GM23248 (cell line): ENCODE measurements at regions of chr11 and their contacts with region 1.

Region 1: GRCh38 chr11:23097891-23098290 is 237.6 kb upstream of the CCDC179 start:
- DNase-seq: no peak
- H3K4me3 ChIP-seq: no peak overlapping the region
- H3K27ac ChIP-seq: no peak overlapping the region
- H3K4me1 ChIP-seq: 0 out of 2 replicates have a peak, but pooled peaks cover 6% of the 10 kb centered on the region
- H3K27me3 ChIP-seq: no peaks in the 10 kb centered on the region

Region 2: DNA sequence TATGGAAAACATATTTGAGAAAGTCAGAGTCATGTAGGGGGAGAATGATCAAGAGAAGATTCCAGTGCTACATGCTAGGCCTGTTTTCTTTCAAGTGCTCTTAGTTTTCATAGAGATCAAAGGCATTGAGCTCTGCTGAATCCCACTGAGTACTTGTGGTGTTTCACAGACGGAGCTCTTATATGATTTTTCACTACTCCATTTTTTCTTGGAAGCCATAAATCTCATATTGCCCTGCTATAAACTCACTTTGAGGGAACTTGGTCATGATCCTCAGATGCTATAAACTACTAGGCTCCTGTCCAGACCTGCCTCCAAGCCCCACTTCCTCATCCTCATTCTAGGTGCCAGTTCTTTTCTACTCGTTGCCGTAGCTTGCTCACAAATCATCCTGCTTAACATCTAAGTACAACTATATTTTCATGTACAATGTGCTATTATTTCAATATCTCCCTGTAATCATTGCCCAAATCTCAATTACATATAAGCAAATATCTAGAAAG is 56.8 kb before region 1 on chr11:
- in situ Hi-C with region 1: loop called (anchors 10 kb)
- DNase-seq: no peak
- H3K4me3 ChIP-seq: no peak overlapping the region
- H3K27ac ChIP-seq: no peak overlapping the region
- H3K4me1 ChIP-seq: no peaks in the 10 kb centered on the region
- H3K27me3 ChIP-seq: no peaks in the 10 kb centered on the region

Region 3: DNA sequence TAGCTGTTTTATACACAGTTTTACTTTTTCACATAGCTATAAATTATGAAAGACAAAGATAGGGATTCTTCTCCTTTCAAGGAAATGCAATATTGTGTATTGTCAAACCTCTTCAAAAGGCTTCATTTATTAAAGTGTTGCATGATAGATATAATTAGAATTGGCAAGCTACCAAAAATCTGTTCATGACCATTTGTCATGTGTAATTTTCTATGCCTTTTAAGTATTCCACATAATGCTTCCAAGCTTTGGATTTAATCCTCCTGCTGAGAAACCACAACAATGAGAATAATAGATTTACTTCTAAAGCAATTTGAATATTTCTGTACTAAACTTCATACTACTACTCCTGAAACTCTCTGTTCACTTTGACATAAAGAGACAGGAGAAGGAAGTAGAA is 165.6 kb after region 1 on chr11:
- in situ Hi-C with region 1: no loop called
- DNase-seq: no peak
- H3K4me3 ChIP-seq: no peak overlapping the region
- H3K27ac ChIP-seq: no peak overlapping the region
- H3K4me1 ChIP-seq: no peaks in the 10 kb centered on the region
- H3K27me3 ChIP-seq: no peaks in the 10 kb centered on the region

Region 4: GRCh38 chr11:23480736-23481135 is 382.8 kb after region 1 on chr11:
- in situ Hi-C with region 1: no loop called
- DNase-seq: no peak
- H3K4me3 ChIP-seq: no peak overlapping the region
- H3K27ac ChIP-seq: no peak overlapping the region
- H3K4me1 ChIP-seq: no peaks in the 10 kb centered on the region
- H3K27me3 ChIP-seq: peaks cover 17% of the 10 kb centered on the region

Region 5: GRCh38 chr11:24163146-24163545 is 1065.3 kb after region 1 on chr11:
- in situ Hi-C with region 1: no loop called
- DNase-seq: peak; percentile 11
- H3K4me3 ChIP-seq: no peak overlapping the region
- H3K27ac ChIP-seq: no peak overlapping the region
- H3K4me1 ChIP-seq: no peaks in the 10 kb centered on the region
- H3K27me3 ChIP-seq: no peaks in the 10 kb centered on the region; the same call in 1 of the 2 replicates